Activated CD4-positive, alpha-beta T cell treated with anti-CD3 and anti-CD28 coated beads for 36 hours (primary cell): ENCODE measurements at regions of chr7 and their contacts with region 1.

Region 1: GRCh38 chr7:29408841-29409243 is 154.8 kb upstream of the PRR15 start:
- DNase-seq: peak; percentile 63
- ATAC-seq: peak; percentile 66
- H3K4me3 Mint-ChIP-seq: no peak overlapping the region
- H3K27ac Mint-ChIP-seq: no peak overlapping the region
- H3K4me1 Mint-ChIP-seq: no peaks in the 10 kb centered on the region
- H3K27me3 Mint-ChIP-seq: no peaks in the 10 kb centered on the region

Region 2: GRCh38 chr7:28955718-28956619 is 452.9 kb before region 1 on chr7:
- CTCF ChIA-PET with region 1: interaction called, 18 read pairs
- POLR2A ChIA-PET with region 1: no interaction called
- intact Hi-C with region 1: loop called in 1 of 2 experiments (anchors 1 kb)
- DNase-seq: peak; percentile 67
- ATAC-seq: peak; percentile 53
- H3K4me3 Mint-ChIP-seq: peak overlapping the region; percentile 24
- H3K27ac Mint-ChIP-seq: no peak overlapping the region
- H3K4me1 Mint-ChIP-seq: peaks cover 7% of the 10 kb centered on the region
- H3K27me3 Mint-ChIP-seq: peaks cover 53% of the 10 kb centered on the region

Region 3: GRCh38 chr7:29105752-29106668 is 302.8 kb before region 1 on chr7:
- CTCF ChIA-PET with region 1: interaction called, 8 read pairs
- POLR2A ChIA-PET with region 1: no interaction called
- intact Hi-C with region 1: loop called (anchors 1 to 2 kb)
- DNase-seq: peak; percentile 24
- ATAC-seq: peak; percentile 68
- H3K4me3 Mint-ChIP-seq: no peak overlapping the region
- H3K27ac Mint-ChIP-seq: no peak overlapping the region
- H3K4me1 Mint-ChIP-seq: no peaks in the 10 kb centered on the region
- H3K27me3 Mint-ChIP-seq: peaks cover 6% of the 10 kb centered on the region

Region 4: DNA sequence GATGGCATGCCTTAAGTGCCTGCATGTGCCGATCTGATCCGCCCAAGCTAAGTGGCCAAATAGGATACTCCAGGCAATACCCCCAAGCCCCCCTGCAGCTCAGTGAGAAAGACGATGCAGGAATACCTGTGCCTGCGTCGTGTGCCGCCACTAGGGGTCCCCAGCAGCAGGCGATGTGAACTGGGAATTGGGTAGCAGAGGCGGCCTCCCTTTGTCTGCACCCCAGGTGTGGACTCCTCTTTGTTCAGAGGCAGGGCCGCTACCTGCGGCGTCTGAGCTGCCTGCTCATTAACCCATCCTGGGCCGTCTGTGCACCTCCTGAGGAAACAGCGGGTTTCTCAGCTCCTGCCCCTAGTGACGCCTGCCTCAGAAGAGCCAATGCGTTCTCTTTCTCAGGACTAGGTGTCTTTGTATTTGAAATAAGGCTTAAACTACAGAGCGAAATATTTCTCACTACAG is 219.1 kb before region 1 on chr7:
- CTCF ChIA-PET with region 1: interaction called, 36 read pairs
- POLR2A ChIA-PET with region 1: no interaction called
- intact Hi-C with region 1: loop called (anchors 1 kb)
- DNase-seq: peak; percentile 77
- ATAC-seq: peak; percentile 83
- H3K4me3 Mint-ChIP-seq: no peak overlapping the region
- H3K27ac Mint-ChIP-seq: no peak overlapping the region
- H3K4me1 Mint-ChIP-seq: no peaks in the 10 kb centered on the region
- H3K27me3 Mint-ChIP-seq: peaks cover 27% of the 10 kb centered on the region

Region 5: GRCh38 chr7:29239638-29240037 is 169.2 kb before region 1 on chr7:
- CTCF ChIA-PET with region 1: no interaction called
- POLR2A ChIA-PET with region 1: no interaction called
- intact Hi-C with region 1: loop called in 1 of 2 experiments (anchors 5 kb)
- DNase-seq: peak; percentile 49
- ATAC-seq: no peak
- H3K4me3 Mint-ChIP-seq: no peak overlapping the region
- H3K27ac Mint-ChIP-seq: no peak overlapping the region
- H3K4me1 Mint-ChIP-seq: peaks cover 20% of the 10 kb centered on the region
- H3K27me3 Mint-ChIP-seq: peaks cover 5% of the 10 kb centered on the region

Region 6: DNA sequence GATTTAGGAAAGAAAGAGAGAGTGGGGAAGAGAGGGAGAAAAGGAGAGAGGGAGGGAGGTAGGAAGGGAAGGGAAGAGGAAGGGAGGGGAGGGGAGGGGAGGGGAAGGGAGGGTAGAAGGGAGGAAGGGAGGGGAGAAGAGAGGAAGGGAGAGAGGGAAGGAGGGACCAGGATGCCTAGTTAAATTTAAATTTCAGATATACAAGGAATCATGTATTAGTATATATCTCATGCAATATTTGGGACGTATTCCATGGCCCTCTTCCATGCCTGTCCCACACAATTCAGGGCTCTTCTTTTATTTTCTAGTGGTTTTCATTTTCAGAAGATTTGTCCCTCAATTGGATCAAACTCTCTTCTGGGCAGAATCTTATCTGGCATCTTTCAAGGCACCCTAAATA is 17.6 kb before region 1 on chr7:
- CTCF ChIA-PET with region 1: interaction called, 10 read pairs
- POLR2A ChIA-PET with region 1: no interaction called
- intact Hi-C with region 1: no loop called
- DNase-seq: no peak
- ATAC-seq: no peak
- H3K4me3 Mint-ChIP-seq: no peak overlapping the region
- H3K27ac Mint-ChIP-seq: no peak overlapping the region
- H3K4me1 Mint-ChIP-seq: no peaks in the 10 kb centered on the region
- H3K27me3 Mint-ChIP-seq: no peaks in the 10 kb centered on the region